ENCODE measurements at regions of chr18 and their contacts with region 1.

Region 1: GRCh38 chr18:27599202-27599829 is 414.2 kb upstream of the CHST9 start:
- DNase-seq: no peak
- ATAC-seq: no peak
- H3K4me3 ChIP-seq: no peak overlapping the region
- H3K27ac ChIP-seq: no peak overlapping the region
- H3K4me1 ChIP-seq: peaks cover 25 to 26% of the 10 kb centered on the region in 2 donors
- H3K27me3 ChIP-seq: no peaks in the 10 kb centered on the region
- CTCF ChIP-seq: peak; percentile 66 to 88 (median 73)
- POLR2A ChIP-seq: no peak

Region 2: GRCh38 chr18:26813043-26813442 is 786.3 kb before region 1 on chr18:
- in situ Hi-C with region 1: loop called in 2 of 4 experiments (anchors 25 kb)
- intact Hi-C with region 1: loop called (anchors 10 kb)
- DNase-seq: peak in 1 of 2 donors; percentile 30
- ATAC-seq: peak; percentile 53 to 73
- H3K4me3 ChIP-seq: no peak overlapping the region
- H3K27ac ChIP-seq: no peak overlapping the region
- H3K4me1 ChIP-seq: no peaks in the 10 kb centered on the region
- H3K27me3 ChIP-seq: no peaks in the 10 kb centered on the region
- CTCF ChIP-seq: peak in 4 of 5 experiments; percentile 14 to 61 (median 44)
- POLR2A ChIP-seq: no peak

Region 3: GRCh38 chr18:27017901-27018500 is 581.3 kb before region 1 on chr18:
- in situ Hi-C with region 1: no loop called
- intact Hi-C with region 1: loop called (anchors 2 kb)
- DNase-seq: no peak
- ATAC-seq: no peak
- H3K4me3 ChIP-seq: no peak overlapping the region
- H3K27ac ChIP-seq: no peak overlapping the region
- H3K4me1 ChIP-seq: no peaks in the 10 kb centered on the region
- H3K27me3 ChIP-seq: no peaks in the 10 kb centered on the region
- CTCF ChIP-seq: peak in 4 of 5 experiments; percentile 6 to 41 (median 22)
- POLR2A ChIP-seq: no peak

Region 4: DNA sequence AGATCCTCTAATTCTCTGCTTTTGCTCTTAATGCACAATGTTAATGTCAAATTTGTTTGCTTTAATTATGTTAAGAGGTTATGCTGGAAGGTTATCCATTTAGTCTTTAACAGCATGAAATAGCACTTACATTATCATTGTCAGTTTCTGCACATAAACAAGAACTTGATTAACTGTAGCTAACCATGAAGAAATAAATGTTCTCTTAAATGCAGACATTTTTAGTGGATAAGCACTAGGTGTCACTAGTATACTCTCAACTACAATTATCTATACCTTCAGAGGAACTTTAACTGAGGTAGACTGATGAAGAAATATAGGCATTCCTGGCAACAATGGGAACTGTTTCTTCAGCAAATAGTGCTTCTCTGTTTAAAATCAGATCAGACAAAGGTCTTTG is 235.4 kb before region 1 on chr18:
- in situ Hi-C with region 1: loop called in 3 of 4 experiments (anchors 5 to 10 kb)
- intact Hi-C with region 1: loop called (anchors 1 kb)
- DNase-seq: no peak
- ATAC-seq: peak in 1 of 2 donors; percentile 36
- H3K4me3 ChIP-seq: no peak overlapping the region
- H3K27ac ChIP-seq: no peak overlapping the region
- H3K4me1 ChIP-seq: no peaks in the 10 kb centered on the region
- H3K27me3 ChIP-seq: no peaks in the 10 kb centered on the region
- CTCF ChIP-seq: peak in 3 of 5 experiments; percentile 25 to 46 (median 36)
- POLR2A ChIP-seq: no peak

Region 5: DNA sequence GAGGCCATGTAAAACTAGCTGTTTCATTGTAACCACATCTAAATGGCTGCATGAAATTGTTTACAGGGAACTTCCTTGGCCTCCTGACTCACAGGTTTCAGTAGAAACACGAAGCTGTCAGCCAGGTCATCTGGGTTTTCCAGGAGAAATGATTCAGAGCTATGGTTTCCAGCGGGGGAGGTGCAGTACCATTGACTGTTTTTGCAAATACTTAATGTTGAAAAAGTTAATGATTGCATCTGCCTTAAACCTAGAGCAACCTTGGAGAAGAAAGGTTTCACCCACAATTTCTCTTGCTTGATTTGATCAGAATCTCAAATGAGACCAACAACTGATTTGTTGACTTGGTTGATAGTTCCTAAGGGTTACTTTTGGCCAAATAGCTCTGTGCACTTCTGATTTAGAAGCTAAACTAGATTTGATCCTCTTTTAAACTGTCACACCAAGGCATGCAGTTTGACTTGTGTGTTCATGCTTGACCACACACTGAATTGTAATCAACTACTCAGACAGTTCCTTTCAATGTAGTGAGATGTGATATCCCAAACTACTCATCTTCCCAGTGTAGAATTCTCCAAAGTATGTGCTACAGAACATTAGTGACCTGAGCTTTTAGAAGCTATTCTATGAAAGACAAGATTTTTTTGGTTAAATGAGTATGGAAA is 220.8 kb before region 1 on chr18:
- in situ Hi-C with region 1: loop called in 1 of 4 experiments (anchors 5 kb)
- intact Hi-C with region 1: no loop called
- DNase-seq: peak; percentile 13 to 19
- ATAC-seq: peak; percentile 81 to 87
- H3K4me3 ChIP-seq: no peak overlapping the region
- H3K27ac ChIP-seq: peak overlapping the region in 2 of 4 donors; percentile 33 to 39
- H3K4me1 ChIP-seq: peaks cover 0 to 5% of the 10 kb centered on the region in 2 donors
- H3K27me3 ChIP-seq: no peaks in the 10 kb centered on the region
- CTCF ChIP-seq: no peak
- POLR2A ChIP-seq: no peak

Region 6: DNA sequence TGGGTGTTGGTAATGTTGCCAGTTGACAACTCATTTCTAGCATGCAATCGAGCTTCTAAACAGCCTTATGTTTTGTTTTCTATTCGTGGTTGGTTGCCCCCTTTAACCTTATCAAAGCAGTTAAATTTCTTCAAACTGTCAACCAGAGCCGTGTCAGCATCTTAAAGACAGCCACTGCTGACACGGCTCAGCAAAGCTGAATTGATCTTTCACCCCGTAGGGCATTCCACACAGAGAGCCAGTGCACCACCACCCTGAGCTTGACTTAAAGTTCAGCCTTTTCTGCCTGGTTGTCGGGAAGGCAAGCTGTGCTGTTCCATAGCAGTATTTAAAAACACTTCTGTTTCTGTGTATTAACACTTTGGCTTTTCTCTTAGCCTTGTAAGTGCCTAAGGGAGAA is 59.2 kb before region 1 on chr18:
- in situ Hi-C with region 1: no loop called
- intact Hi-C with region 1: no loop called
- DNase-seq: no peak
- ATAC-seq: no peak
- H3K4me3 ChIP-seq: no peak overlapping the region
- H3K27ac ChIP-seq: no peak overlapping the region
- H3K4me1 ChIP-seq: peaks cover 8 to 14% of the 10 kb centered on the region in 2 donors
- H3K27me3 ChIP-seq: no peaks in the 10 kb centered on the region
- CTCF ChIP-seq: no peak
- POLR2A ChIP-seq: no peak

Region 7: GRCh38 chr18:27887287-27887686 is 288.0 kb after region 1 on chr18:
- in situ Hi-C with region 1: no loop called
- intact Hi-C with region 1: no loop called
- DNase-seq: no peak
- ATAC-seq: no peak
- H3K4me3 ChIP-seq: no peak overlapping the region
- H3K27ac ChIP-seq: no peak overlapping the region
- H3K4me1 ChIP-seq: no peaks in the 10 kb centered on the region
- H3K27me3 ChIP-seq: no peaks in the 10 kb centered on the region
- CTCF ChIP-seq: no peak
- POLR2A ChIP-seq: no peak

Region 8: GRCh38 chr18:28284132-28284531 is 684.8 kb after region 1 on chr18:
- in situ Hi-C with region 1: no loop called
- intact Hi-C with region 1: no loop called
- DNase-seq: no peak
- ATAC-seq: no peak
- H3K4me3 ChIP-seq: no peak overlapping the region
- H3K27ac ChIP-seq: no peak overlapping the region
- H3K4me1 ChIP-seq: no peaks in the 10 kb centered on the region
- H3K27me3 ChIP-seq: no peaks in the 10 kb centered on the region
- CTCF ChIP-seq: no peak
- POLR2A ChIP-seq: no peak

Measured in gastrocnemius medialis (tissue), 4 donors.